ENCODE measurements at regions of chr14 and their contacts with region 1.

Region 1: DNA sequence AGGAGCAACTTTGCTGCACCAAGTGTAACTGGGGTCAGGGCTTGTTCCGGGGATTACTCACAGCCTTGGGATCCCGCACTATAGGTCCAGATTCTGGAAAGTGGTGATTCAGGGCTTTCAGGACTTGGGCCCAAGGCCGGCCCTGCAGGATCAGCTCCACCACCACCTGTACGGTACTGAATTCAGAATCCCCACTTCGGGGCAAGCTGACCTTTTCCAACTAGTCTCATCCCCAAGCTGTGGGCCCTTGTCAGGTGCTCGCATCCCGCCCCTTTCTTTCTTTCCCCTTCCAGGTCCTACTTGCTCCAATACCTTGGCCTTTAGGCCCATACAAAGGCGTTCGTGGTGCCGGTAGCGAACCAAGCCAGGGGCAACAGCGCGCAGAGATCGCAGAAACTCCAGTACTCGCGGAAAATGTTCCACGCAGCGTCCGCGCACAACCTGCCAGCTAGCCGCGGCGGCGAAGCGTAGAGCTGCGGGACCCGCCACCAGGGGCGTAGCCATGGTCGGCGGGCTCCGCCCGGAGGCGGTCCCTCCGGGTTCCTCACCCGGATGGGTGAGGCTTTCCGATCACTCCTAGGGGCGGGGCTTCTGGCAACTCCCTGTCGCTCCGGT is 487 bp downstream of the TINF2 start:
- DNase-seq: peak; percentile 93
- H3K4me3 ChIP-seq: peak overlapping the region; percentile 54 to 71 (median 63)
- H3K27ac ChIP-seq: peak overlapping the region; percentile 97
- H3K4me1 ChIP-seq: peaks cover 44% of the 10 kb centered on the region
- H3K27me3 ChIP-seq: no peaks in the 10 kb centered on the region
- CTCF ChIP-seq: peak in 1 of 2 donors; percentile 51

Region 2: GRCh38 chr14:24013654-24014514 is 228.1 kb before region 1 on chr14:
- CTCF ChIA-PET with region 1: no interaction called
- dilution Hi-C with region 1: no loop called
- in situ Hi-C with region 1: no loop called
- intact Hi-C with region 1: loop called (anchors 1 kb)
- DNase-seq: peak; percentile 65
- H3K4me3 ChIP-seq: no peak overlapping the region
- H3K27ac ChIP-seq: no peak overlapping the region
- H3K4me1 ChIP-seq: no peaks in the 10 kb centered on the region
- H3K27me3 ChIP-seq: no peaks in the 10 kb centered on the region
- CTCF ChIP-seq: peak; percentile 86 to 90

Region 3: GRCh38 chr14:24195191-24196070 is 46.5 kb before region 1 on chr14 and contains the start of gene TM9SF1:
- CTCF ChIA-PET with region 1: no interaction called
- dilution Hi-C with region 1: no loop called
- in situ Hi-C with region 1: no loop called
- intact Hi-C with region 1: loop called (anchors 2 kb)
- DNase-seq: peak; percentile 81
- H3K4me3 ChIP-seq: peak within 1 kb of the TSS; percentile 84 to 90 (median 85)
- H3K27ac ChIP-seq: peak within 1 kb of the TSS; percentile 92
- H3K4me1 ChIP-seq: peaks cover 14% of the 10 kb centered on the region
- H3K27me3 ChIP-seq: no peaks in the 10 kb centered on the region
- CTCF ChIP-seq: no peak
- total RNA-seq, gene TM9SF1: 50.9 to 64.2 TPM

Region 4: DNA sequence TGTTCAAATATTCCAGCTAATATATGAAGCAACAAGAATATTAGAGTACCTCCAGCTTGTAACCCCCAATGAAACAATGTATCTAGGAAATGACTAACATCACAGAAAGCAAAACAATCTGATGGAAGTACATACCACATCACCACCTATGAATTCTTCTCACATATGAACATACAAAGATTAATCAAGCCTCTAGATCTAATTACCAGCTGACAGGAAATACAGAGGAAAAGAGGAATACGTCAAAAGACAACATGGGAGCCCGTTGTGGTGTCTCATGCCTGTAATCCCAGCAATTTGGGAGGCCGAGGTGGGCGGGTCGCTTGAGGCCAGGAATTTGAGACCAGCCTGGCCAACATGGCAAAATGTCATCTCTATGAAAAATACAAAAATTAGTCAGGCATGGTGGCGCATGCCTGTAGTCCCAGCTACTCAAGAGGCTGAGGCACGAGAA is 17.3 kb before region 1 on chr14:
- CTCF ChIA-PET with region 1: no interaction called
- dilution Hi-C with region 1: no loop called
- in situ Hi-C with region 1: no loop called
- intact Hi-C with region 1: loop called (anchors 1 kb)
- DNase-seq: peak; percentile 86
- H3K4me3 ChIP-seq: no peak overlapping the region
- H3K27ac ChIP-seq: peak overlapping the region; percentile 74
- H3K4me1 ChIP-seq: peaks cover 12% of the 10 kb centered on the region
- H3K27me3 ChIP-seq: no peaks in the 10 kb centered on the region
- CTCF ChIP-seq: no peak

Region 5: GRCh38 chr14:24289649-24290249 is 47.8 kb after region 1 on chr14:
- CTCF ChIA-PET with region 1: no interaction called
- dilution Hi-C with region 1: no loop called
- in situ Hi-C with region 1: loop called in 1 of 2 experiments (anchors 5 kb)
- intact Hi-C with region 1: no loop called
- DNase-seq: no peak
- H3K4me3 ChIP-seq: no peak overlapping the region
- H3K27ac ChIP-seq: no peak overlapping the region
- H3K4me1 ChIP-seq: peaks cover 14% of the 10 kb centered on the region
- H3K27me3 ChIP-seq: no peaks in the 10 kb centered on the region
- CTCF ChIP-seq: no peak

Region 6: GRCh38 chr14:24351517-24351916 is 109.6 kb after region 1 on chr14:
- CTCF ChIA-PET with region 1: no interaction called
- dilution Hi-C with region 1: no loop called
- in situ Hi-C with region 1: no loop called
- intact Hi-C with region 1: no loop called
- DNase-seq: peak; percentile 43
- H3K4me3 ChIP-seq: no peak overlapping the region
- H3K27ac ChIP-seq: no peak overlapping the region
- H3K4me1 ChIP-seq: peaks cover 2% of the 10 kb centered on the region
- H3K27me3 ChIP-seq: no peaks in the 10 kb centered on the region
- CTCF ChIP-seq: no peak

Measured in mammary epithelial cell (primary cell).